HCT116 (cell line): ENCODE measurements at regions of chr5 and their contacts with region 1.

Region 1: DNA sequence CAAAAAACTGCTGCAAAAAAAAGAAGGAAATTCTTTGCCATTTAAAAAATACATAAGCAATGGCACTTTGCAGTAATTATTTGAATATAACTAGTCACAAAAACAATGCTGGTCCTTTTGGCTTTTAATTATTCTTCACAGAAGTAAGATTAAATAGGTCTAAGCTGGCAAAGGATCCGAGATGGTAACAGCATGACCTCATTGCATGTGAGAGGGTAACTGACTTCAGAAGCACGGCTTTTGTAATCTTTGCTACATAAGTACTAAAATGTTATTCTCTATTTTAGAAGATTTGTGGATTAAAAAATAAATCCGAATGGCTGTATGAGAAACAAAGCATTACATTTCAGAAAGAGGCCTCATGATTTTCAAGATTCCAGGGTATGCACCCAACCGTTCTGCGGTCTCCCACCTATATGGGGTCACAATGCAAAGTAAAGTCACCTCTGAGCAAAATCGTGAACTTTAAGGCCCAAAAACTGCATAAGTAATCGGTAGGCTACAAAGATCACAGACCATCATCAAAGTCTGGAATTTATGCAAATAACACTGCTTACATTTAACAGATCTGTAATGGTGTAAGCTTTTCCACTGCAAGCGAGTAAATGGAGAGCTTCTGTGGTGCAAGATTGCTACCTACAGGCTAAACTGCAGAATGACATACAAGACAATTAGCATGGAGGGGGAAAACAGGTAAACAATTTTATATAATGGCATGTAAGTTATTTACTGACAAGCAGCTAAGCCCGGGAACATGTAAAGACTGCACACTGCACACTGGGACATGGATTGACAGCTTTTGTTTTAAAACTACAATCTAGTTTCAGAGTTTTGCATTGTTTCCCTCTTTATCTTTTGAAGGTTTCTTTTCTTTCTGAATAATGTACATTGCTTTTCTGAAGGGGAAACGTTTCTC is 231.6 kb downstream of the SLF1 start:
- DNase-seq: peak; percentile 59
- ATAC-seq: peak; percentile 96
- H3K4me3 ChIP-seq: peak overlapping the region in 1 of 2 experiments; percentile 18; a peak in 2 of 4 replicates
- H3K27ac ChIP-seq: no peak overlapping the region
- H3K4me1 ChIP-seq: 0 out of 4 replicates have a peak, but pooled peaks cover 0 to 4% of the 10 kb centered on the region in 2 experiments
- H3K27me3 ChIP-seq: no peaks in the 10 kb centered on the region
- CTCF ChIP-seq: peak; percentile 58 to 85 (median 69); a peak in 5 of 6 replicates
- POLR2A ChIP-seq: no peak
- RAD21 ChIP-seq: peak; percentile 83

Region 2: DNA sequence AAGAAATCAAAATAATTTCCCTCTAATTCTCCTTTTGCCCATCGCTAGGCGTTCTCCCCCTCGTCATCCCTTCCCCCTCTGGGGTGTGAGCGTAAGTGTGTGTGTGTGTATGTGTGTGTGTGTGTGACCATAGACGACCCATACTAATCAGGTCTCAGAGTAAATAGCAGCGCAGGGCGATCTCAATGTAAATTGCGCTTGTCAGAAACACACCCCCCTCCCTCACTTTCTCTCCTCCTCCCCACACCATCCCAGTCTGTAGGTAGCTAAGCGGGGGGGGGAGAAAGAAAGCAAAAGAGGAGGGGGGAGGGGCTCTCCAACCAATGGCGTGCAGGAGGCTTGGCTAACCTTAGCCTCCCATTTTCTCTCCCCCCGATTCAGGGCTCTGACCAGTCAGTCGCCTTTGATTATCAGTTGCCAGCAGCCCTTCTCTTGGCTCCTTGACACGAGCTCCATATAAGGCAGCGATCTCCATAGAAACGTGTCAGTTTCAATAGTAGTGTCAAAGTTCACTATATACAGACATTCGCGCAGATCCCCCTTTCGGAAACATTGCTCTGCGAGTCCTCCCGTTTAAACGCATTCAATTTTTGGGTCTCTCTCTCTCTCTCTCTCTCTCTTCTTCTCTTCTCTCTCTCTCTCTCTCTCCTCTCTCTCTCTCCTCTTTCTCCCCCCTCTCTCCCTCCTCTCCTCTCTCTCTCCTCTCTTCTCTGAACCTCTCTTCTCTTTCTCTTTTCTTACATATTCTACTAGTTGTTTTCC is 1267.2 kb before region 1 on chr5 and contains the start of gene NR2F1:
- CTCF ChIA-PET with region 1: no interaction called
- POLR2A ChIA-PET with region 1: no interaction called
- RAD21 ChIA-PET with region 1: no interaction called
- intact Hi-C with region 1: no loop called
- DNase-seq: peak; percentile 98
- ATAC-seq: peak; percentile 55
- H3K4me3 ChIP-seq: peak within 1 kb of the TSS; percentile 70 to 85
- H3K27ac ChIP-seq: peak within 1 kb of the TSS; percentile 99
- H3K4me1 ChIP-seq: peaks cover 20 to 33% of the 10 kb centered on the region in 2 experiments
- H3K27me3 ChIP-seq: no peaks in the 10 kb centered on the region
- CTCF ChIP-seq: no peak; a peak in 1 of 6 replicates
- POLR2A ChIP-seq: no peak
- RAD21 ChIP-seq: no peak; the same call in 1 of the 2 replicates
- total RNA-seq, gene NR2F1: 51.2 TPM

Region 3: GRCh38 chr5:93607367-93608258 is 1242.5 kb before region 1 on chr5:
- CTCF ChIA-PET with region 1: no interaction called
- POLR2A ChIA-PET with region 1: no interaction called
- RAD21 ChIA-PET with region 1: no interaction called
- intact Hi-C with region 1: loop called (anchors 10 kb)
- DNase-seq: no peak
- ATAC-seq: peak; percentile 83
- H3K4me3 ChIP-seq: no peak overlapping the region
- H3K27ac ChIP-seq: no peak overlapping the region
- H3K4me1 ChIP-seq: peaks cover 14 to 18% of the 10 kb centered on the region in 2 experiments; a peak in 2 of 4 replicates
- H3K27me3 ChIP-seq: peaks cover 54% of the 10 kb centered on the region
- CTCF ChIP-seq: peak; percentile 55 to 78 (median 67)
- POLR2A ChIP-seq: no peak
- RAD21 ChIP-seq: peak; percentile 77

Region 4: GRCh38 chr5:95043234-95043633 is 193.2 kb after region 1 on chr5:
- CTCF ChIA-PET with region 1: no interaction called
- POLR2A ChIA-PET with region 1: no interaction called
- RAD21 ChIA-PET with region 1: no interaction called
- intact Hi-C with region 1: no loop called
- DNase-seq: no peak
- ATAC-seq: no peak
- H3K4me3 ChIP-seq: no peak overlapping the region
- H3K27ac ChIP-seq: no peak overlapping the region
- H3K4me1 ChIP-seq: no peaks in the 10 kb centered on the region
- H3K27me3 ChIP-seq: no peaks in the 10 kb centered on the region
- CTCF ChIP-seq: no peak
- POLR2A ChIP-seq: no peak
- RAD21 ChIP-seq: no peak